HEK293T (cell line): ENCODE measurements at regions of chr3 and their contacts with region 1.

Region 1: GRCh38 chr3:150183678-150184425 is 213.2 kb upstream of the PFN2 start:
- DNase-seq: peak; percentile 78

Region 2: DNA sequence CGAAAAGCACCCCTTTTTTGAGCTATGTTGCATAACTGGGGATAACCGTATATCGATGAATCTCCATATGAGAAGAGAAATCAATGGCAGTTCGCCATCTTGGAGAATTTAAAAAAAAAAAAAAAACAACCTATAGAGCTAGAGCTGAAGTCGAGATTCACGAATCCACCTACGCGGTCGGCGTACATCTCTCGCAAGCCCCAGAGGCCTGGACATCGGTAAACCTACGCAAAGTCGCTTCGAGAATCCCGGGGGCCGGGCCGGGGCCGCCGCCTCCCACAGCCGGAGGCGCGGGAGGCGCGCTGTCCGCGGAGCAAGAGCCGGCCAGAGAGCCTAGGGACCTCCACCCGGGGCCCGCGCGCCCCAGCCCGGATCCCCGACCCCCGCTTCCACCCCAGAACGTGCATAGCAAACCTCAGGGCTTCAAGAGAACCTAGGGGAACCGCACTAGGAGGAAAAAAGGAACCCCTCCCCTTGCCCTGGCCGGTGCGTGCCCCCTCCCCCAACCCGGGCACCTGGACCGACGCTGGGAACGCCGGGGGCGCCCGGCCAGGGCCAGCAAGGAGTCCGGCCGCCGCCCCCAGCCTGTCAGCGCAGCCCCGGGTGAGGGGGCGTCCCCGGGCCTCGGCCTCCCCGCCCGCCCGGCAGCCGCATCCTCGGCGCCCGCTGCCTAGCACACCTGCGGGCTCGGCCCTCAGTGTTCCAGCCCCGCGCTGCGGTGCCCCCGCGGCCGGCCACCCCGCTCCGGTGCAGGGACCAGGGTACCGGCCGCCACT is 213.7 kb before region 1 on chr3:
- CTCF ChIA-PET with region 1: interaction called, 20 read pairs
- POLR2A ChIA-PET with region 1: interaction called, 27 read pairs
- DNase-seq: peak; percentile 64

Region 3: DNA sequence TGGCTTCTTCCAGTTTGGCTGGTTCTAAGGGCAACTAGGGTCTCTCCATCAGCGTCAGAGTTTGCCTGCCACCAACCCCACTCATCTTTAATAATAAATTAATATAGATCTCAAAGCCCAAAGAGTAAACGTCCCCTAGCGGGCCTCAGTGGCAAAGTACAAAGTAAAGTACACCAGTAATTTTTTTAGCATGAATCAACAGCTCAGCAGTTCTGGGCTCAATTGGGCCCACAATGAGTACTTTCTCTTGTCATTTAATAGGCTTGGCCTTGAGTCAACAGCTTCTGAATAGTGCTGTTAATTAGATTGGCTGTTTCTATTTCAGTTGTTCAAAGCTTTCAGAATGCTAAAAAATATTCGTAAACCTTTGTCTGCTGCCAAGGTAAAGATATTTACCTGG is 124.1 kb before region 1 on chr3:
- CTCF ChIA-PET with region 1: no interaction called
- POLR2A ChIA-PET with region 1: no interaction called
- DNase-seq: no peak

Region 4: DNA sequence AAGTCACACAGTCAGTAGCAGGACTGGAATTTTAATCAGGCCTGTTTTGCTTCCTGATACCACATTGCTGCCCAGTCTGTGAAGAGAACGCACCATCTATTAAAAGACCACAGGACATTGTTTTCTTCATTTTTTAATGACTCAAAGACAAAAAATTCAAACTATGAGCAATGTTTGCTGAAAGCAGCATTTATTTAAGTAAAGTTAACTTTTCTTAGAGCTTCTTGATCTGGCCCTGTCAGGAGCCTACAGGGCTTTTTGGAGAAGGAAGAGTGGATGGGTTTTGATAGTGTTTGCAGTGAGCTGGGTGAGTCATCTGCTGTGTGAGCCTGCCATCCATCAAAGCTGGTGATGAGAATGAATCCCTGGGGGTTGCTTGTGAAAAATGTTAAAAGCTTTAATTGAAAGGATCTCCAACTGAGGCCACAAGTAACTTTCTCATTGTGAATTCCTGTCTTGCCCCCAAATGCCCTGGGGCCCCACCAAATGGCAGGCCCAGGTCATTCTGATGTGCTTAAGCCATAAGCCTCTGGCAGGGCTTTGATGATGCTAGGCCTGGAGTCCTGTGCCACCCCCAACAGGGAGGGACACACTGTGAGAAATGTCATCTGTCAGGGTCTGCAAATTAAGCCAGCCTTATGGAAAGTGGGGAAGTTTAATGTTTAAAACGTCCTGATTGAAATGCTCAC is 77.0 kb before region 1 on chr3:
- CTCF ChIA-PET with region 1: no interaction called
- POLR2A ChIA-PET with region 1: no interaction called
- DNase-seq: peak; percentile 59

Region 5: GRCh38 chr3:150161011-150161410 is 22.8 kb before region 1 on chr3:
- CTCF ChIA-PET with region 1: no interaction called
- POLR2A ChIA-PET with region 1: no interaction called
- DNase-seq: no peak